IMR-90 (cell line): ENCODE measurements at regions of chr11 and their contacts with region 1.

Region 1: GRCh38 chr11:73141848-73142286 is 251 bp downstream of the FCHSD2 start:
- DNase-seq: peak; percentile 69
- ATAC-seq: peak; percentile 53
- H3K4me3 ChIP-seq: peak overlapping the region; percentile 68
- H3K27ac ChIP-seq: peak overlapping the region; percentile 76
- H3K4me1 ChIP-seq: peaks cover 10% of the 10 kb centered on the region; the same call in 1 of the 2 replicates
- H3K27me3 ChIP-seq: no peaks in the 10 kb centered on the region
- CTCF ChIP-seq: peak; percentile 15; the same call in 1 of the 2 replicates
- POLR2A ChIP-seq: no peak; the same call in none of the 2 replicates
- RAD21 ChIP-seq: no peak

Region 2: GRCh38 chr11:72722050-72722748 is 419.7 kb before region 1 on chr11:
- CTCF ChIA-PET with region 1: no interaction called
- POLR2A ChIA-PET with region 1: no interaction called
- dilution Hi-C with region 1: no loop called
- in situ Hi-C with region 1: loop called (anchors 10 kb)
- intact Hi-C with region 1: no loop called
- DNase-seq: peak; percentile 89
- ATAC-seq: peak; percentile 92
- H3K4me3 ChIP-seq: peak overlapping the region; percentile 41
- H3K27ac ChIP-seq: peak overlapping the region; percentile 93
- H3K4me1 ChIP-seq: peaks cover 27% of the 10 kb centered on the region
- H3K27me3 ChIP-seq: no peaks in the 10 kb centered on the region
- CTCF ChIP-seq: no peak
- POLR2A ChIP-seq: peak; percentile 54; the same call in 1 of the 2 replicates
- RAD21 ChIP-seq: no peak

Region 3: DNA sequence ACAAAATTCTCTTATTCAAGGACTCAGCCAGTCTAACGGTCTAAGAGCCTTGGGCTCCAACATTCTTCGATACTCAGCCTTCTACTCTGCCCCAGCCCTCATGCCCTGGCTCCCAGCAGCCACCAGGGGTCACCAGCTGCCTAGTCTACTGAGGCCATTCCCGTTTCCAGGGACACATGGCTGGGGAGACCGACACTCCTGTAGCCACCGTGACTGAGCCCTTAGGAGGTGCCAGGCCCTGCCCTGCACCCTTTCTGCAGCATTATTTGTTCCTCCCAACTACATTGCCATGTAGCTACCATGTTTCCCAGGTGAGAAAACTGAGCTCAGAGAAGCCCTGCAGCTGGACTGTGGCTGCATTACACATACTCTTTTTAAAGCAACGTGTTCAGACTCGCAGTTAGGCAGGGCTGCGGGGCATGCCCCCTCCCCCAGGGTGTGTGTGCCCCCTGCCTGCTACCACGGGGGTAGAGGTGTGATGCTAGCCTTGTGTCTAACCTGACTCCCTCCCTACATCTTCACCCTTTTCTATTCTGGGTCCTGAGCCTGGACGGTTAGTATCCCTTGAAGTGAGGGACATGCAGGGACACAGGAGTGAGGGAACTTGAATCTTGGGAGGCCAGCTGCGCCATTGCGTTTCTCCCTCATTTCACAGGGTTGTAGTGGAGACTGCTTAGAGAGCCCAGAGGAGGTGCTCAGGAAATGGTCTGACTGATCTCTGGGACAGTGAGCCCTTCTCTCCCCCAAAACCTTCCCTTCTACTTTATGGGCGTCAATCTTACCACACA is 310.2 kb before region 1 on chr11:
- CTCF ChIA-PET with region 1: interaction called, 3 read pairs
- POLR2A ChIA-PET with region 1: no interaction called
- dilution Hi-C with region 1: no loop called
- in situ Hi-C with region 1: no loop called
- intact Hi-C with region 1: loop called (anchors 2 kb)
- DNase-seq: peak; percentile 71
- ATAC-seq: peak; percentile 94
- H3K4me3 ChIP-seq: no peak overlapping the region
- H3K27ac ChIP-seq: no peak overlapping the region
- H3K4me1 ChIP-seq: peaks cover 9% of the 10 kb centered on the region
- H3K27me3 ChIP-seq: no peaks in the 10 kb centered on the region
- CTCF ChIP-seq: peak; percentile 91
- POLR2A ChIP-seq: no peak
- RAD21 ChIP-seq: peak; percentile 96

Region 4: GRCh38 chr11:73157053-73158010 is 15.5 kb after region 1 on chr11:
- CTCF ChIA-PET with region 1: interaction called, 16 read pairs
- POLR2A ChIA-PET with region 1: interaction called, 5 read pairs
- dilution Hi-C with region 1: no loop called
- in situ Hi-C with region 1: no loop called
- intact Hi-C with region 1: loop called (anchors 1 kb)
- DNase-seq: peak; percentile 81
- ATAC-seq: peak; percentile 87
- H3K4me3 ChIP-seq: no peak overlapping the region
- H3K27ac ChIP-seq: peak overlapping the region; percentile 88
- H3K4me1 ChIP-seq: peaks cover 42% of the 10 kb centered on the region
- H3K27me3 ChIP-seq: no peaks in the 10 kb centered on the region
- CTCF ChIP-seq: no peak
- POLR2A ChIP-seq: no peak
- RAD21 ChIP-seq: no peak

Region 5: GRCh38 chr11:73288873-73289707 is 147.2 kb after region 1 on chr11:
- CTCF ChIA-PET with region 1: no interaction called
- POLR2A ChIA-PET with region 1: no interaction called
- dilution Hi-C with region 1: no loop called
- in situ Hi-C with region 1: no loop called
- intact Hi-C with region 1: loop called (anchors 1 kb)
- DNase-seq: peak; percentile 65
- ATAC-seq: peak; percentile 98
- H3K4me3 ChIP-seq: no peak overlapping the region
- H3K27ac ChIP-seq: peak overlapping the region; percentile 1; the same call in 1 of the 2 replicates
- H3K4me1 ChIP-seq: peaks cover 8% of the 10 kb centered on the region
- H3K27me3 ChIP-seq: no peaks in the 10 kb centered on the region
- CTCF ChIP-seq: peak; percentile 99
- POLR2A ChIP-seq: peak; percentile 50; the same call in 1 of the 2 replicates
- RAD21 ChIP-seq: peak; percentile 100